Head of caudate nucleus (tissue), 42 donors: ENCODE measurements at regions of chr4 and their contacts with region 1.

Region 1: DNA sequence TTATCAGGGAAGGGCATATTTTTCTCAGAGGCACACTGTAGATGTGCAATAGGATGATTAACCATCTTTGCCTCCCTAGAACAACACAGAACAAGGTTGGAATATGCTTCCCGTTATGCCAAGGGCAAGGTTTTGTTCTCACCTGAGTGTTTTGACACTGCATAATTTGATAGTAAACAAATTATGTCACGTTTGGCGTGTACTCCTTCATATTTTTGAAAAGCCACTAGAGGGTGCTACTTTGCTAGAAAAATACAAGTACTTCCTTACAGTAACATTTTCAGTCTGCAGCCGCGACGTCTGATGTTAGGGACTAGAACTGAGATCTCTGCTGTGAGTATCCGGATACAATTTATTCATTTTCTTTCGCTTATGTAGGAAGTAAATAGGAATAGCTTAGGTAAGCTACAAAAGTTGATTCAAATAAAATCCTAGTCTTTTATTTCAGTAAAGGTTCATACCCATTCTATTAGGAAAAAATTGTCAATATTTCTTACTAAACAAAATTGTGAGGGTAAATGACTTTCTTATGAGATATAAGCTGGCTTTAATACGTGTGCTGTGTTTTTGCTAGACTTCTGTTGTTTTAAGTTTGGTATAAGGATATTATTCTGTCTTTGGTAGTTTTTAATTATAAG is 181.1 kb upstream of the WDFY3 start:
- DNase-seq: peak; percentile 21 to 87 (median 62)

Region 2: DNA sequence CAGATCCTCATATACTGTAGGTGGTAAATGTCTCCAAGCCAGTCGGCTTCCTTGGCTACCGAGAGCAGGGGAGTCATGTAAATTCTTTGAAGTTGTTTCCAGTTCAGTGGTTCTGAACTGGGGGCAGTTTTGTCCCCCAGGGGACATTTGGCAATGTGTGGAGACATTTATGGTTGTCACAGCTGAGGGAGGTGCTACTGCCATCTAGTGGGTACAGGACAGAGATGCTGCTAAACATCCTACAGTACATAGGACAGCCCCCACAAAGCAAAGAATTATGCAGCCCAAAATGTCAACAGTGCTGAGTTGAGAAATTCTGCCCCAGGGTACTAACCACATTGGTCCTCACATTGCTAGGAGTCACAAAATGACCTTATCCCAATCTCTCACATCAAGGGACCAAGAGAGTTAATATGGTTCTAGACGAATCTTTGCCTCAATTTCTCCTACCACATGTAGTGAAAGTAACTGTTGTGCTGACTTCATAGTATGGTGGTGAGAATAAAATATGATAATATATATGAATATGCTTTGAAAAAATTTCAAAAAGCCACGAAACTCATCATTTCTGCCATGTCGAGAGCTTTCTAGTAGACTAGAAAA is 223.0 kb after region 1 on chr4:
- intact Hi-C with region 1: loop called (anchors 10 kb)
- DNase-seq: peak in 36 of 42 donors; percentile 5 to 74 (median 38)

Region 3: DNA sequence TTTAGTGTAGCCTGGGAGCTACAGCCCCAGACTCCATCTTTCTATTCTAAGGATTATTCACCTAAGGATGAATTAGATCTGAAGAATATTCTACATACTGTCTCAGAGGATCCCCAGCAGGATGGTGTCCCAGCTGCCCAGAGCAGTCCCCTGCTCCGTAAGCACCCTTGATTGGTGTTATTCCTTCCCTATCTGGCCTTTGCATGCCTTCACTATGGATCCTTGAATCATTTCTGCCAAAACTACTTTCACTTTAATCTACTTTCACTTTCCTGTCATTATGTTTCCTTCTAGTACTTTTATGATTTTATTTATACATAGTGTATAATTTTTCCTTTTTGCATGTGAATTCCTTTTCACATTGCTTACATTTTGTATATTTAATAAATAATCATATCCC is 366.6 kb after region 1 on chr4:
- intact Hi-C with region 1: no loop called
- DNase-seq: no peak

Region 4: GRCh38 chr4:85747882-85748491 is 600.4 kb after region 1 on chr4:
- intact Hi-C with region 1: loop called (anchors 5 kb)
- DNase-seq: peak in 25 of 42 donors; percentile 21 to 81 (median 54)

Region 5: DNA sequence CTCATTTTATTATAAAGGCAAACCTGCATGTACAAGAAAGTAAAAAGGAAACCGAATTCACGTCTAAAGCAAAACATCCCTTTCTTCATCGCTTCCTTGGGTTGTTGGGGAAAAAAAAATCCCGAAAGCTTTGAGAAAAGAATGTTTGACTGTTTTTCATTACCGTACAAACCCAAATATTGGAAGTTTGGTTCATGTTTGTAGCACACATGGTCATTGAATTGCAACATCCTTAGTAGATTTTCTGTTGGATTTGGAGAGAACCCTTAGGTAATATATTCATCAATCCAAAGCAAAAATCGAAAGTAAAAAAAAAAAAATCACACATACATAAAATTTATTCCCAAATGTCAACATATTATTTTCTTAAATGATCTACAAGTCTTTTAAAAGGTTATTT is 792.0 kb after region 1 on chr4:
- intact Hi-C with region 1: no loop called
- DNase-seq: no peak

Region 6: GRCh38 chr4:85968945-85969819 is 821.6 kb after region 1 on chr4:
- intact Hi-C with region 1: loop called (anchors 10 kb)
- DNase-seq: peak in 6 of 42 donors; percentile 2 to 43 (median 6)